Posterior cingulate gyrus (tissue), 11 donors: ENCODE measurements at regions of chr2 and their contacts with region 1.

Region 1: GRCh38 chr2:135585586-135585985 is 54.3 kb downstream of the R3HDM1 start:
- DNase-seq: no peak

Region 2: DNA sequence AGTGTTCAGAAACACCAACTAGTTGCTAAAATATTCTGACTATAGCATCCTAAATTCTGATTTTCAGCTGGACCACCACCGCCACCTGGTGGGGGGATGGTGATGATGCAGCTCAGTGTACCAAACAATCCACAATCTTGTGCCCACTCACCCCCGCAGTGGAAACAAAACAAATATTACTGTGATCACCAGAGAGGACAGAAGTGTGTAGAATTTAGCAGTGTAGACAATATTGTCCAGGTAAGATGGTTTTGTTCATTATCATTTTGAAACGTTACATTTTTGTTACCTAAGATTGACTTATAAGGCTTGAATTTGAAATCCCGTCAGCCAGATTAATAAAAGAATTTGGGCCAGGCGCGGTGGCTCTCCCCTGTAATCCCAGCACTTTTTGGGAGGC is 124.4 kb after region 1 on chr2:
- intact Hi-C with region 1: loop called (anchors 10 kb)
- DNase-seq: peak; percentile 34 to 94 (median 74)